Left colon (tissue), 2 donors: ENCODE measurements at regions of chr1 and their contacts with region 1.

Region 1: GRCh38 chr1:53182111-53182593 is 14.5 kb upstream of the CPT2 start:
- DNase-seq: peak; percentile 81 to 94
- ATAC-seq: peak; percentile 43

Region 2: GRCh38 chr1:52937433-52938182 is 244.5 kb before region 1 on chr1:
- intact Hi-C with region 1: loop called in 1 of 2 experiments (anchors 10 kb)
- DNase-seq: no peak
- ATAC-seq: no peak

Region 3: DNA sequence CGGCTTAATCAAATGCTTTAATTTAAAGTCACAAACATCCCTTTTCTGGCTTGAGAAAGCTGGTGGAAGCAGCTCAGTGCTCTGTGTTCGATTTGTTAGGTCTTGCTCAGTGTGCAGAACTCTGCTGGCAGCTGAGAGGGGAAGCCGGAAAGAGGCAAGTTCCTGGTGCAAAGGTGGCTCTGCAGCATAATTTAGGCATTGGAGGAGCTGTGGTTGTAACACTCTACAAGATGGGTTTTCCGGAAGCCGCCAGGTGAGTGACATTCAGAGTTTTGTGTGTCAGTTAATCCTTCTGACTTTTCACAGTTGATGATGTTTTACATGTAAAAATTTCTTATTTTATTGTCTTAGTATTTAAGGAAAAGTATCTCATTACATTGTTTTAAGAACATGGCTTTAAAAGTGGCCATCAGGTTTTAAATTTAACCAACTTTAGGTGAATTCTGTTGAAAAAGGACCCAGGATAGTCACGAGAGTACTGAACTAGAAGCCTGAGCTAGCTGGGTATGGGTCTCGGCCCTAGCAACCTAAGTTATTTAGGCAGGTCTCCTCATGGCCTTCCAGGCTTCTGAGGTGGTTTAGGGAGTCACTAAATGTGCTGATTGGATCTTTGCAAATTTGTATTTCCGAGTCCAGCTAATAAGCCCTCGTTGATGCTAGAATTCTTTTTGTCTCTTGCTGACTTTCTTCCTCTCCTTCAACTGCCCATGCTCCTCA is 167.2 kb before region 1 on chr1:
- intact Hi-C with region 1: loop called in 1 of 2 experiments (anchors 10 kb)
- DNase-seq: peak; percentile 82 to 91
- ATAC-seq: peak; percentile 100